Activated T-helper 1 cell treated with anti-CD3 and anti-CD28 coated beads, Interleukin-12 subunit alpha, Interleukin-12 subunit beta, Interleukin-2, Interleukin-4 antibody, amounts not matched to agents 30 ng/mL and 10 ng/mL and 1 ng/mL, durations not matched to agents 14 hours and 24 hours and 36 hours (primary cell): ENCODE measurements at regions of chr4 and their contacts with region 1.

Region 1: DNA sequence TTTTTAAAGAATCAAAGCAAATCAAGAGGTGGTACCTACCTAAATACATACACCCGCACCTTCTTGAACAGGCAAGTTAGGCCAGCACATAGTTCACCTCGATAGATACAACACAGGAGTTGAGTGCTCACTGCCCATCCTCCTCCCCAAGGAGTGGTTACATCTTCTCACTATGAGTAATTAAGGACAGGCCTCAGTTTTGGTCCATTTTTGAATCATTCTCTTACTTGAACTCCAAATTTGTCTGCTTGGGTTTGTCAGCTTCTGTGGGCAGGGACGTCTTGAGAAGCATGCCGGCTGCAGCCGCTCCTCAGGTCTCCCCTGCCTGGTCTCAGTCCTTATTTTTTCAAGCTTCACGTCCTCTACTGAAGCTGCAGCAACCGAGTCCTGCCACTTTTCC is 190.6 kb upstream of the RBPJ start:
- DNase-seq: no peak
- H3K4me3 Mint-ChIP-seq: no peak overlapping the region
- H3K27ac Mint-ChIP-seq: peak overlapping the region; percentile 65
- H3K4me1 Mint-ChIP-seq: peaks cover 81% of the 10 kb centered on the region
- H3K27me3 Mint-ChIP-seq: no peaks in the 10 kb centered on the region

Region 2: DNA sequence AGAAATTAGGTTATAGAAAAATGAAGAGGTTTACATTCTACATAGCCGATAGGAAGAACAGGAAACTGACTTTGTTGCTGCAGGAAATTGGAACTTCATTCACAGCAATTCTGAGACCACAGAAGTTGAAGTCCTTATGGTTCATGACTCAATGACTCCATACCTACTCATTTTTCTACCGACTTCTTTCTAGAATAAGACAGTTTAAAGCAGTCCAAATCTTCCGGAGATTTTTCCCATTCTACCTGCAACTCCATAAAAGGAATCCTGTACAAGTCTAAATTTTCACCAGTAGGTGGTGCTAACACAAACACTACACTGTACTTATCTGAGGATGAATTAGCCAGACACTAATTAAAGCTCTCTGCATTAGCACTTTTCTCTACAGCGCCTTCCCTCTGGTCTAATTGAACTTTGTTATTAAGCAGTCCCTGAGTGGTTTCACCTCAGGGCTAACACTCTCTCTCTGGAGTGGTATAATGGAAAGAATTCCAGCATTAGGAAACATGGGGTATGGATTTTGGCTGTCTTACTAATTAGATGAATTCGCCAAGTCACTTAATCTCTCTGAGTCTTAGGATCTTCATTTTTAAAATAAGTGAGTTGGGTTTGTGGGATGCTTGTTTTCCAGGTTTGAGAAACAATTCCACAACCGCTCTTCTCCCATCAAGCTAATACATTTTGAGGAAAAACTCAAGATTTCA is 48.2 kb before region 1 on chr4:
- intact Hi-C with region 1: loop called (anchors 1 kb)
- DNase-seq: no peak
- H3K4me3 Mint-ChIP-seq: peak overlapping the region; percentile 48
- H3K27ac Mint-ChIP-seq: peak overlapping the region; percentile 81
- H3K4me1 Mint-ChIP-seq: peaks cover 83% of the 10 kb centered on the region
- H3K27me3 Mint-ChIP-seq: no peaks in the 10 kb centered on the region

Region 3: DNA sequence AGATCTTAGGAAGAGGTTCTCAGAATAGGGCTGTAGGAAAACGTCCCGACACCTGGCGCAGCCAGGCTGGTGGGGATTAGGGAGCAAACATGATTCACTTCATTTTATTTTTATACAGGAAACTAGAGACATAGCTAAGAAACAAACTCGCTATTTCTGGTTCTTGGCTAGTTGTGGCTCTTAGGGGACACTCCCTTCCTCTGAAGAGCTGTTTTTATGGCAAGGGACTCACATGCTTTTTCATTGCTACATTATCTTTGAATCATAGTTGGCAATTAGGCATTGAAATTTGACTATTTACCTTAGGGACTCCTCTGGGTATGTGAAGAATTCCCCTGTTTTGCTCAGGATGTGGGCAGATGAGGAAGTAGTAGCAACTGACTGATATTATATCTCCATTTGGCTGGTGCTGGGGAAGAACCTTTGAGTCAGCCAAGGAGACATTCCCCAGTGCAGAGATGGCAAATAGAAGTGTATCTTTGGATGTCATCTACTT is 41.7 kb before region 1 on chr4:
- intact Hi-C with region 1: loop called (anchors 1 kb)
- DNase-seq: peak; percentile 34
- H3K4me3 Mint-ChIP-seq: peak overlapping the region; percentile 71
- H3K27ac Mint-ChIP-seq: peak overlapping the region; percentile 94
- H3K4me1 Mint-ChIP-seq: peaks cover 68% of the 10 kb centered on the region
- H3K27me3 Mint-ChIP-seq: no peaks in the 10 kb centered on the region

Region 4: DNA sequence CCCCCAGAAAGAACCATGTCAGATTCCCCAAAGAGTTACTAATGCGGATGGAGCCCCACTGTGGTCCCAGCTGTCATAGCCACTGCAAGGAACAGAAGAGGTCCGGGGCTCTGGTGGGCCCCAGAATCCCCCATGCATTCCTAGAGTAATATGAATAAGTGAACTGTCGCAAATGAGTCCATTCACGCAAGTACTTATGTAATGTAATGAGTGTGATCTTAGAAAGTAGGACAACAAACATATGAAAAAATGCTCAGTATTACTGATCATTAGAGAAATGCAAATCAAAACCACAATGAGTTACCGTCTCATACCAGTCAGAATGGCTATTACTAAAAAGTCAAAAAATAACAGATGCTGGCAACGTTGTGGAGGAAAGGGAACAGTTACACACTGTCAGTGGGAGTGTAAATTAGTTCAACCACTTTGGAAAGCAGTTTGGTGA is 49.2 kb after region 1 on chr4:
- intact Hi-C with region 1: loop called (anchors 1 kb)
- DNase-seq: no peak
- H3K4me3 Mint-ChIP-seq: no peak overlapping the region
- H3K27ac Mint-ChIP-seq: peak overlapping the region; percentile 64
- H3K4me1 Mint-ChIP-seq: peaks cover 44% of the 10 kb centered on the region
- H3K27me3 Mint-ChIP-seq: no peaks in the 10 kb centered on the region